HepG2 (cell line): ENCODE measurements at regions of chr20 and their contacts with region 1.

Region 1: DNA sequence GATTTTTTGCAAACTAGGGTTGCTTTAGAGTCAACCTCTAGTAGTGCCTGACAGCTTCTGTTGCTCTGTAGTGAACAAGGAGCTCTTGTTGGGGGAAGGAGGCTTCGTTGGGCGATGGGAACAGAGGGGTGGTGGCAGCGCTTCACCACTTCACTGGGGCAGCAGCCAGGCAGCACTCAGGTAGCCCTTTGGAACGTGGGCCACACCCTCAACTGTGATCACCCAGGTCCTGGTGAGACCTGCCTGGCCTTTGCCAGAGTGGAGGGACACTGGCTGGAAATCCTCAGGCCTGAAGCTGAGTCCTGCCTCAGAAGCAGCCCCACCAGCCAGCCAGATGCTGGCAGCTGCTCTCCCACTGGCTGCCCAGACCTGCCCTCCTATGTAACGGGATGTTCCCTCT is 10.4 kb upstream of the EDN3 start:
- DNase-seq: no peak
- ATAC-seq: no peak
- H3K4me3 ChIP-seq: no peak overlapping the region
- H3K27ac ChIP-seq: no peak overlapping the region
- H3K4me1 ChIP-seq: no peaks in the 10 kb centered on the region
- H3K27me3 ChIP-seq: peaks cover 8 to 42% of the 10 kb centered on the region in 2 experiments; a peak in 3 of 5 replicates
- CTCF ChIP-seq: no peak
- EP300 ChIP-seq: no peak
- POLR2A ChIP-seq: no peak
- RAD21 ChIP-seq: no peak

Region 2: GRCh38 chr20:60321601-60322000 is 1031.6 kb after region 1 on chr20:
- CTCF ChIA-PET with region 1: no interaction called
- POLR2A ChIA-PET with region 1: no interaction called
- in situ Hi-C with region 1: no loop called
- intact Hi-C with region 1: loop called (anchors 5 kb)
- DNase-seq: no peak
- ATAC-seq: no peak
- H3K4me3 ChIP-seq: no peak overlapping the region
- H3K27ac ChIP-seq: no peak overlapping the region
- H3K4me1 ChIP-seq: no peaks in the 10 kb centered on the region
- H3K27me3 ChIP-seq: no peaks in the 10 kb centered on the region
- CTCF ChIP-seq: no peak
- EP300 ChIP-seq: no peak
- POLR2A ChIP-seq: no peak
- RAD21 ChIP-seq: no peak